Heart right ventricle (tissue), 16 donors: ENCODE measurements at regions of chr3 and their contacts with region 1.

Region 1: GRCh38 chr3:5026331-5027218 is 47.3 kb downstream of the BHLHE40 start:
- DNase-seq: peak; percentile 92 to 93
- ATAC-seq: peak; percentile 91 to 97 (median 95)
- H3K4me3 ChIP-seq: peak overlapping the region; percentile 8 to 63 (median 53)
- H3K27ac ChIP-seq: peak overlapping the region; percentile 75 to 94 (median 86)
- H3K4me1 ChIP-seq: peaks cover 0 to 23% (median 5%) of the 10 kb centered on the region in 9 donors
- H3K27me3 ChIP-seq: no peaks in the 10 kb centered on the region
- CTCF ChIP-seq: peak; percentile 51 to 76 (median 68)

Region 2: GRCh38 chr3:4546346-4547178 is 480.0 kb before region 1 on chr3:
- intact Hi-C with region 1: no loop called
- DNase-seq: no peak
- ATAC-seq: peak in 1 of 8 donors; percentile 27
- H3K4me3 ChIP-seq: no peak overlapping the region
- H3K27ac ChIP-seq: no peak overlapping the region
- H3K4me1 ChIP-seq: peaks cover 0 to 41% (median 27%) of the 10 kb centered on the region in 9 donors
- H3K27me3 ChIP-seq: no peaks in the 10 kb centered on the region
- CTCF ChIP-seq: no peak

Region 3: DNA sequence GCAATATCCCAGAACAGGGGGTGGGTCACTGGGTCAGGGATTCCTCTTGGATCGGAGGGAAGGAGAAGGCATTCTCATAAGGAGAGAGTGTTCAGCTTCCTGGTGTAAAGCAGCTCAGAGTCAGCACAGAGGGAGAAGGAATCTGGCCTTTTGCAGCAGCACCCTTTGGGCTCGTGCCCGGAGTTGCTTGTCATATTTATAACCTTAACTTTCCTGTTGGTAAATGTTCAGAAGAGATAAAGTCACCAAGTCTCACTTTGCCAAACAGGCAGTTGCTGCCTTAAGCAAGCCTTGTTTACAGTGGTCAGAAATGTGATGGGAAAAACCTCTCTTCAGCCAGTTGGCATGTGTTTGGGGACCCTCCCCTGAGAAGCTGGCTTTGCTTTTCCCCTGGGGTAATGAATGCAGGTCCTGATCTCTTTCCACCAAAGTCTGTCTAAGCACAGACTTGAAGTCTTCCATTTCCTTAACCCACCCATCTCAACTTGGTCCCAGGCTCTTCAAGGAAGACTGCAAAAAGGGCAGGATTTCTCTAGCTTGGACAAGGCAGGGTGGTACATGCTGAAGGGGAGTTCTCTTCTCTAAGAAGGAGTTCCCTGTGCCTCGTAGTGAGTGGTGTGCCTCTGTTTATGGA is 254.3 kb before region 1 on chr3:
- intact Hi-C with region 1: loop called in 1 of 10 experiments (anchors 2 kb)
- DNase-seq: peak; percentile 84 to 86
- ATAC-seq: peak; percentile 85 to 92 (median 91)
- H3K4me3 ChIP-seq: peak overlapping the region in 1 of 10 donors; percentile 5
- H3K27ac ChIP-seq: peak overlapping the region; percentile 71 to 89 (median 84)
- H3K4me1 ChIP-seq: peaks cover 17 to 46% (median 31%) of the 10 kb centered on the region in 9 donors
- H3K27me3 ChIP-seq: no peaks in the 10 kb centered on the region
- CTCF ChIP-seq: no peak

Region 4: DNA sequence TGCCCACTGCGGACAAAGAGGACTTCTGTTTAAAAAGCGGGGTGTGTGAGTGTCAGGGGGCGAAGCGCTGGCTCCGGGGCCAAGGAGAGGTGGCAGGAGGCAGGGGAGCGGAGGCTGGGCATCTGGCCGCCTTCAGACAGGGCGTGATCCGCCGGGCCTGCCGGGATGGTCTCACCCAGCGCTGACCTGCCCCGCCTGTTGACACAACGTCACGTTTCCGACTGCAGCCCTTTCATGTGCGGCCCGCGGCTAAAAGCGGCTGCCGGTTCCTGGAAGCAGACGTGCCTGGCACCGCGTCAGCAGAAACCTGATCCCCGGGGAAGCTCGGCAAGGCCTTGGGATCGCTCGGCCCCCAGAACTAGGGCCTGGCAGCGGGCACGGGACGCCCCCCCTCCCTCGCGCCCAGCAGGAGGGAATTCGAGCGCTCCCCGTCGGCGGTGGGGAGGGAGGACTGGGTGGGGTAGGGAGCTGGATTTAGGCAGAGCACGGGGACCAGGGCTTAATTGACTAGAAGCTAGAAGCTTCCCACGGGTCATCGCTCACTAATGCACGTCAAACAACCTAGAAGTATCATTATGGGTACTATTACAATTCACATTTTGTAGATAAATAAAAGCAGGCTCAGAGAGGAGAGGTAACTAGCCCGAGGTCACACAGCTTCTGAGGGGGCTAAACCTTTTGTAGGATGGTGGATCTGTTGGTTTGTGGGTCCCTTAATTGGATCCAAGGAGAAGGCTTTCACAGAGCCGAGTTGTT is 39.6 kb before region 1 on chr3:
- intact Hi-C with region 1: loop called in 3 of 10 experiments (anchors 2 to 5 kb)
- DNase-seq: peak; percentile 97 to 98
- ATAC-seq: peak; percentile 85 to 95 (median 90)
- H3K4me3 ChIP-seq: peak overlapping the region in 9 of 10 donors; percentile 22 to 98 (median 73)
- H3K27ac ChIP-seq: peak overlapping the region; percentile 92 to 100 (median 100)
- H3K4me1 ChIP-seq: peaks cover 24 to 87% (median 73%) of the 10 kb centered on the region in 9 donors
- H3K27me3 ChIP-seq: no peaks in the 10 kb centered on the region
- CTCF ChIP-seq: peak in 5 of 9 donors; percentile 10 to 35 (median 28)

Region 5: DNA sequence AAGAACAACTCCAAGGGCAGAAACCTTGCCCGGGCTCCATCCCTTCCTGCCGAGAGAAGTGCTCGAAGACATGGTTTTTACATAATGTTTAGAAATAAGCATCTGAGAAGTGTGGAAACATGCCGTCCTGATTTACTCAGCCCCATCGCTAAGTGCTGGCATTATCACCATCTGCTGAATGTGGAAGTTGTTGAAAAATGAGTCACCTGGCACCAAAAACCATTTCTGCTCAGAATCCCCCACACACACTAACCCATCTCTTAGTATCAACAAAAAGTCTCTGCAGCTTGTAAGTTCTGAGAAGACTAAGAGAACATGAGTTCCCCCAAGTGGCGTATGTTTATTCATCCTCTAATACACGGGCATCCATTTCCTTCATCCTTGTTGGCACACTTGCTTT is 44.5 kb after region 1 on chr3:
- intact Hi-C with region 1: no loop called
- DNase-seq: no peak
- ATAC-seq: peak in 1 of 8 donors; percentile 23
- H3K4me3 ChIP-seq: no peak overlapping the region
- H3K27ac ChIP-seq: no peak overlapping the region
- H3K4me1 ChIP-seq: peaks cover 0 to 4% (median 0%) of the 10 kb centered on the region in 9 donors
- H3K27me3 ChIP-seq: peaks cover 0 to 5% (median 0%) of the 10 kb centered on the region in 7 donors
- CTCF ChIP-seq: no peak